Activated B cell treated with CpG ODN at 0.5 μM for 24 hours (primary cell): ENCODE measurements at regions of chr12 and their contacts with region 1.

Region 1: DNA sequence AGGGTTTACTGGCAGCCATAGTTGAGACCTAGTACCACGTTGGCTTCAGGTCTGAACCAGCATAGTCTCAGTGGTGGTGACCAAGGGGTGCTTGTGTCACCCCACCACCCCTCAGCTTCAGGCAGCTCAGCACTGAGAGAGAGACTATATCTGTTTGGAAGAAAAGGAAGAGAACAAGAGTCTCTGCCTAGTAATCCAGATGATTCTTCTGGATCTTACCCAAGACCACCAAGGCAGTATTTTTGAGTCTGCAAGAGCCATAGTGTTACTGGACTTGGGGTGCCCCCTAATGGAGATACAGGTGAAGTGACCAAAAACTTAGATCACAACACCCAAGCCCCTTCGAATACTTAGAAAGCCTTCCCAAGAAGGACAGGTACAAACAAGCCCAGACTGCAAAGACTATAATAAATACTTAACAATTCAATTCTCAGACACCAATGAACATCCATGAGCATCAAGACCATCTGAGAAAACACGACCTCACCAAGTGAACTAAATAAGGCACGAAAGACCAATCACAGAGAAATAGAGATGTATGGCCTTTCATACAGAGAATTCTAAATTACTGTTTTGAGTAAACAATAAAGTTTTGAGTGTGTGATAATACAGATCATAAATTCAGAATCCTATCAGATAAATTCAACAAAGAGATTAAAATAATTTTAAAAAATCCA is 107.0 kb downstream of the HELB start:
- DNase-seq: no peak
- ATAC-seq: no peak
- H3K4me3 Mint-ChIP-seq: no peak overlapping the region
- H3K27ac Mint-ChIP-seq: no peak overlapping the region
- H3K4me1 Mint-ChIP-seq: no peaks in the 10 kb centered on the region
- H3K27me3 Mint-ChIP-seq: no peaks in the 10 kb centered on the region
- CTCF ChIP-seq: no peak

Region 2: DNA sequence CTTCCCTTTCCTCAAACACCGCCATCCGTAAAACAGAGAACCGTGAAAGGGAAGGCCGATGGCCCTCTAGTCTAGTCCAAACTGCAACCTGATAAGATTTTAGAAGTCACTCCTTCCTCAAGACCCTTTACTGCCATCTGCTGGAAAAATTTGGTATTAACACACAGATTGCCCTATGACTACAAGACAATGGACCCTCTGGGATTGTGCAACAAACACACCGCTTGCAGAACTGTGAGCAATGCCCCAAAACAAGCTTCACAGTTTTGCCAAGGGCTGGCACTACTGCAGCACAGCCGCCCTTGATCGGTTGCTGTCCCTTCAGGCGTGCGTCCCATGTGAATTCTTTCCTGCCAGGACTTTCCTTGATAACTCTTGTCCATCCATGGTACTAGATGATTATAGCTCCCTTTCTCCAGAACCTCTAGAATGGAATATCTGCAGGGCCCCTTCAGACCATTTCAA is 301.9 kb before region 1 on chr12:
- CTCF ChIA-PET with region 1: no interaction called
- POLR2A ChIA-PET with region 1: no interaction called
- intact Hi-C with region 1: loop called (anchors 1 kb)
- DNase-seq: no peak
- ATAC-seq: peak; percentile 85
- H3K4me3 Mint-ChIP-seq: no peak overlapping the region
- H3K27ac Mint-ChIP-seq: no peak overlapping the region
- H3K4me1 Mint-ChIP-seq: peaks cover 3% of the 10 kb centered on the region
- H3K27me3 Mint-ChIP-seq: peaks cover 12% of the 10 kb centered on the region
- CTCF ChIP-seq: peak; percentile 71

Region 3: GRCh38 chr12:66144791-66145754 is 264.3 kb before region 1 on chr12:
- CTCF ChIA-PET with region 1: interaction called, 7 read pairs
- POLR2A ChIA-PET with region 1: no interaction called
- intact Hi-C with region 1: loop called (anchors 1 kb)
- DNase-seq: no peak
- ATAC-seq: no peak
- H3K4me3 Mint-ChIP-seq: no peak overlapping the region
- H3K27ac Mint-ChIP-seq: peak overlapping the region; percentile 56
- H3K4me1 Mint-ChIP-seq: peaks cover 20% of the 10 kb centered on the region
- H3K27me3 Mint-ChIP-seq: no peaks in the 10 kb centered on the region
- CTCF ChIP-seq: no peak

Region 4: DNA sequence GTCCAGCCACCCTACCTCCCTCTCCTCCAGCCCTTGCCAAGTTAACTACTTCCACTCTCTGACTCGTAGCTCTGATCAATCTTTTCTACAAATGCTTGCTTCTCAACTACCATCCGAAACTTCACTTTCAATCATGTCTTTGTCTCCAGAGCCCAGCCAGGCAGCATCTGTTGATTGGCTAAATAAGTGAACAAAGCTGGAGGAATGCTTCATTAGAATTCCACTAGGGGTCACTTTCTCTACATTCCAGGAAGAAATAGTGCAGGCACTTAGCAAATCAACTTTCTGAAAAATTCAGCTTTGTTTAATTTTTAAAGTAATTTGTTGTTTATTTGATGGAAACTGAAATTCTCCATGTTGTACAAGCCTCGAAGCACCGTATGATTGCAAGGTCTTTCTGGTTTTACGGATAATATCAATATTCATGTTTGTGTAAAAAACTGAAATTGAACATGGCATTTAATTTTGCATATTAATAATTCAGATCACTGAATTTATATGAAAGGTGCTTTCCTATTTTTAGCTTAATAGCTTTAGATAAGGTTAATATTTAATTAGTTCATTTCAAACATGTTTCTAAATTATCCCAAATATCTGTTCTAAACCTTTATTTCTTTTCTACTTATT is 139.5 kb before region 1 on chr12:
- CTCF ChIA-PET with region 1: interaction called, 6 read pairs
- POLR2A ChIA-PET with region 1: no interaction called
- intact Hi-C with region 1: loop called (anchors 2 kb)
- DNase-seq: no peak
- ATAC-seq: no peak
- H3K4me3 Mint-ChIP-seq: no peak overlapping the region
- H3K27ac Mint-ChIP-seq: no peak overlapping the region
- H3K4me1 Mint-ChIP-seq: no peaks in the 10 kb centered on the region
- H3K27me3 Mint-ChIP-seq: peaks cover 2% of the 10 kb centered on the region
- CTCF ChIP-seq: no peak

Region 5: GRCh38 chr12:66482351-66483203 is 73.2 kb after region 1 on chr12:
- CTCF ChIA-PET with region 1: no interaction called
- POLR2A ChIA-PET with region 1: no interaction called
- intact Hi-C with region 1: no loop called
- DNase-seq: no peak
- ATAC-seq: no peak
- H3K4me3 Mint-ChIP-seq: no peak overlapping the region
- H3K27ac Mint-ChIP-seq: no peak overlapping the region
- H3K4me1 Mint-ChIP-seq: no peaks in the 10 kb centered on the region
- H3K27me3 Mint-ChIP-seq: no peaks in the 10 kb centered on the region
- CTCF ChIP-seq: no peak